PC-3 (cell line): ENCODE measurements at regions of chrX and their contacts with region 1.

Region 1: DNA sequence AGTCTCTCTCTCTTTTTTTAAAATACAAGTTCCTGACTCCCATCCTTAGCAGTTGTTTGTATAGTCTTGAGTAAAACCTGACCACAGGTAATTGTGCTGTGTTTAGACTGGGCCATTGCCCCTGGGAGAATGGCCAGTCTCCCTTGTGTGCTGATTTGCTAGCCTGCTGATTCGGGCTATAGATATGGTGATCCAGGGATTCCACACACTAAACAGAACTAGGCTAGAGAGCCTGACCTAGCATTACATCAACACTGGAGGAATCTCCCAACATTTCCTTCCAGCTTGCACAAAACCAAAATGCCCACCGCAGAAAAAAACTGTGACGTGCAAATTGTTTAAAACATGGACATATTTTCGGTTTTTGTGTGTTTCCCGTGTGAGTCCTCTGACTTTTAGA is 5.1 kb downstream of the UPRT start:
- DNase-seq: no peak
- ATAC-seq: no peak
- H3K4me3 ChIP-seq: no peak overlapping the region
- H3K27ac ChIP-seq: no peak overlapping the region
- H3K4me1 ChIP-seq: peaks cover 7% of the 10 kb centered on the region
- H3K27me3 ChIP-seq: no peaks in the 10 kb centered on the region
- CTCF ChIP-seq: no peak

Region 2: GRCh38 chrX:74853255-74853654 is 425.7 kb before region 1 on chrX:
- CTCF ChIA-PET with region 1: no interaction called
- POLR2A ChIA-PET with region 1: no interaction called
- intact Hi-C with region 1: no loop called
- DNase-seq: no peak
- ATAC-seq: no peak
- H3K4me3 ChIP-seq: no peak overlapping the region
- H3K27ac ChIP-seq: no peak overlapping the region
- H3K4me1 ChIP-seq: no peaks in the 10 kb centered on the region
- H3K27me3 ChIP-seq: no peaks in the 10 kb centered on the region
- CTCF ChIP-seq: no peak

Region 3: GRCh38 chrX:75156021-75156945 is 122.7 kb before region 1 on chrX and contains the start of gene ABCB7:
- CTCF ChIA-PET with region 1: no interaction called
- POLR2A ChIA-PET with region 1: no interaction called
- intact Hi-C with region 1: loop called (anchors 5 kb)
- DNase-seq: peak; percentile 75
- ATAC-seq: peak; percentile 94
- H3K4me3 ChIP-seq: peak within 1 kb of the TSS; percentile 85
- H3K27ac ChIP-seq: peak within 1 kb of the TSS; percentile 40
- H3K4me1 ChIP-seq: peaks cover 14% of the 10 kb centered on the region
- H3K27me3 ChIP-seq: no peaks in the 10 kb centered on the region
- CTCF ChIP-seq: no peak
- total RNA-seq, gene ABCB7: 34.6 and 36.2 TPM in 2 replicates